OCI-LY7 (cell line): ENCODE measurements at regions of chr10 and their contacts with region 1.

Region 1: GRCh38 chr10:21020545-21020944 is 123.4 kb upstream of the NEBL start:
- DNase-seq: peak; percentile 80
- H3K4me3 ChIP-seq: no peak overlapping the region
- H3K27ac ChIP-seq: no peak overlapping the region
- H3K4me1 ChIP-seq: no peaks in the 10 kb centered on the region
- CTCF ChIP-seq: peak; percentile 93

Region 2: GRCh38 chr10:19532411-19532810 is 1488.1 kb before region 1 on chr10:
- CTCF ChIA-PET with region 1: no interaction called
- POLR2A ChIA-PET with region 1: no interaction called
- intact Hi-C with region 1: no loop called
- DNase-seq: no peak
- H3K4me3 ChIP-seq: no peak overlapping the region
- H3K27ac ChIP-seq: no peak overlapping the region
- H3K4me1 ChIP-seq: no peaks in the 10 kb centered on the region
- CTCF ChIP-seq: no peak

Region 3: DNA sequence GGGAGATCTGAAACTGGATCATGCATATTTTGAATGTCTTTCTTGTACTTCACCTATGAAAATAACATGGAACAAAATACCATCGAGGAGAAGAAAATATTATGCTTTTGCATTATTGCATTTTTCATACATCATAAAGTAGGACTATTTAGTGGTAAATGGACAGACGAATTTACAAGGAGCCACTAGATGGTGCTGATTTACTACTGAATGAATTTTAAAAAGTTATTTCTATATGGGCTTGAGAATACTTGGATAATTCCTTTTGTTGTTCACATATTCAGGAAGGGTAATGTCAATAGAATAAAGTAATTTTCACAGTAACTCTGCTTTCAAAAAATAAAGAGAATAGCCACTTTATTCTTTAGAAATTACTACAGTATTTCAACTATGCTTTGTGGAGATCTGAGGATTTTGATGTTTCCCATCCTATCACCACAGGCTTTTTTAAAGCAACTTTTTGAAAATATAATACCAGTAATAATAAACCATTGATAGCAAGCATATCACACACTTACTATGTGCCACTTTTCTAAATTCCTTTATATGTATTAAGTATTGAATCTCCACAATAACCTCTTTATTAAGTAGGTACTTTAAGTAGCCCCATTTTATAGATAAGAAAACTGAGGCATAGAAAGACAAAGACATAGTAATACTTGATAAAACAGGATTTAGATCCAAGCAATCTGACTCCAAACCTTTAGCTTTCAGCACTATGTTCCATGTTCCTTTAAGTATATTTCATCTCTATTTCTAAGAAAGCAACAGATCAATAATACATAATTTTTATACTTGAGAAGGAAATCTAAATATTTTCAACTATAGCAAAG is 162.0 kb before region 1 on chr10:
- CTCF ChIA-PET with region 1: no interaction called
- POLR2A ChIA-PET with region 1: interaction called, 3 read pairs
- intact Hi-C with region 1: loop called (anchors 1 kb)
- DNase-seq: peak; percentile 44
- H3K4me3 ChIP-seq: no peak overlapping the region
- H3K27ac ChIP-seq: no peak overlapping the region
- H3K4me1 ChIP-seq: no peaks in the 10 kb centered on the region
- CTCF ChIP-seq: peak; percentile 89

Region 4: DNA sequence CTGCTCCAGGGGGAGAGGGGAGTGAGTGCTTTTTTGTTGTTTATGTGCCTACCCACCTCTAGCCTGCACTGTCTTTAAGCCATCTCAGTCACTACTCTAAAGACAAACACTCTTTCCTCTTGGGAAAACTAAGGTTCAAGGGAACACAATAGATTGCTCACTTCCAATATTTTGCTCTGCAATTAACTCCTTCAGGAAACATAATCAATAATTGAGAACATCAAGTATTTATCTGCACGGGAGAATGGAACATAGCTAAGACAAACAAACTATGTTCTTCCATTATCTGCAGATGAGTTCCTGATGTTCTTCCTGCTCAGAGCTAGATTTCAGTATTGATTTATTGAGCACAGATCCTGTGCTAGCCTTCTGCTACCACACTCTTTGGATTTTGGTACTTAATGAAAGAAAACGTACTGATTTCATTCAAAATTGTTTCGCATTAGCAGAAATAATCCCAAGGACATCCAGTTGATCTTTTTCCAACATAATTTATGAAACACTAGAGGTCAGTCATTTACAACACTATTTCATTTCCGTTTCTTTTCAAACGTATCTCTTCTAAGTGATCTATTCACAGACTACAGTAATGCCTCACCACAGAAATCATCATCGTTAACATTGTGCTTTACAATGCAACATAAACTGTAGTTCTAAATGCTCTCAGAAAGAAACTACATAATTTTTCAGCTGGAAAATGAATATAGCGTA is 131.8 kb before region 1 on chr10:
- CTCF ChIA-PET with region 1: no interaction called
- POLR2A ChIA-PET with region 1: interaction called, 3 read pairs
- intact Hi-C with region 1: loop called (anchors 2 kb)
- DNase-seq: peak; percentile 18
- H3K4me3 ChIP-seq: no peak overlapping the region
- H3K27ac ChIP-seq: no peak overlapping the region
- H3K4me1 ChIP-seq: peaks cover 6% of the 10 kb centered on the region
- CTCF ChIP-seq: peak; percentile 64